ENCODE measurements at regions of chr19 and their contacts with region 1.

Region 1: DNA sequence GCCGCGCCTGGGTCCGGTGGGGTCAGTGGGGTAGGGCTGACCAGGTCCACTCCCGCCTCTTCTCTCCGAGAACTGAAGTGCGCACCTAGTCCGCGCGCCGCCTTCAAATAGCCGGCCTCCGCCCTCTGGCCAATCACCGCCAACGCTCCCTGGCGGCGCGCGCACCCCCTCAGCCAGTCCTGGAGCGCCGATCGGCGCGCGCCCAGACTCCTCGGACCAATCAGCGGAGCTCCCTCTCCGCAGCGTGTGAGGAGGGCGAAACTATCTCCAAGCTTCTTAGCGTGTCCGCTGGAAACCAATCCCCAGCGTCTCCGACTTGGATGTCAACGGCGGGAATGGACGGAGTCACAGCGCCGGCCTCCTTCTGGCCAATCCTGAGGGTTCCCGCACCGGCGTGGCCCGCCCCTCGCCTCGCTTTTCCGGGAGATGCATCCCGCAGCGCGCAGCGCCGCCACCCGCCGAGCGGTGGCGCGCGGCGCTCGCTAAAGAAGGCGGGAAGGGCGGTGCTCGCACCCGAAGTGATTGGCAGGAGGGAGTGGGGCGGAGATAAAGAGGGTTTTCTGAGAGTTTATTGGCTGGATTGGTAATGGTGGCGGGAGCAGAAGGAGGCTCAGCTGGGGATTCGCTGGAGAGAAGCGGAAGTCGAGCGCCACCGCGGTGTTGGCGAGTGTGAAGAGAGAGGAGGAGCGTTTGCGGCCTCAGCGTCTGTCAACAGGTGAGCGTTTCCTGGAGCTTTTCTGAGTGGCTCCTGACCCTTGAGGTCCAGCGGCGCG is at the start of gene ASF1B:
- DNase-seq: peak; percentile 98
- ATAC-seq: peak; percentile 90
- H3K4me3 Mint-ChIP-seq: peak within 1 kb of the TSS; percentile 86
- H3K27ac Mint-ChIP-seq: peak within 1 kb of the TSS; percentile 98
- H3K4me1 Mint-ChIP-seq: peaks cover 19% of the 10 kb centered on the region
- H3K27me3 Mint-ChIP-seq: no peaks in the 10 kb centered on the region; the same call in 1 of the 2 replicates
- CTCF ChIP-seq: no peak; the same call in 1 of the 2 replicates
- total RNA-seq, gene ASF1B: 37.1 to 40.4 TPM (median 38.4 TPM) in 3 replicates

Region 2: DNA sequence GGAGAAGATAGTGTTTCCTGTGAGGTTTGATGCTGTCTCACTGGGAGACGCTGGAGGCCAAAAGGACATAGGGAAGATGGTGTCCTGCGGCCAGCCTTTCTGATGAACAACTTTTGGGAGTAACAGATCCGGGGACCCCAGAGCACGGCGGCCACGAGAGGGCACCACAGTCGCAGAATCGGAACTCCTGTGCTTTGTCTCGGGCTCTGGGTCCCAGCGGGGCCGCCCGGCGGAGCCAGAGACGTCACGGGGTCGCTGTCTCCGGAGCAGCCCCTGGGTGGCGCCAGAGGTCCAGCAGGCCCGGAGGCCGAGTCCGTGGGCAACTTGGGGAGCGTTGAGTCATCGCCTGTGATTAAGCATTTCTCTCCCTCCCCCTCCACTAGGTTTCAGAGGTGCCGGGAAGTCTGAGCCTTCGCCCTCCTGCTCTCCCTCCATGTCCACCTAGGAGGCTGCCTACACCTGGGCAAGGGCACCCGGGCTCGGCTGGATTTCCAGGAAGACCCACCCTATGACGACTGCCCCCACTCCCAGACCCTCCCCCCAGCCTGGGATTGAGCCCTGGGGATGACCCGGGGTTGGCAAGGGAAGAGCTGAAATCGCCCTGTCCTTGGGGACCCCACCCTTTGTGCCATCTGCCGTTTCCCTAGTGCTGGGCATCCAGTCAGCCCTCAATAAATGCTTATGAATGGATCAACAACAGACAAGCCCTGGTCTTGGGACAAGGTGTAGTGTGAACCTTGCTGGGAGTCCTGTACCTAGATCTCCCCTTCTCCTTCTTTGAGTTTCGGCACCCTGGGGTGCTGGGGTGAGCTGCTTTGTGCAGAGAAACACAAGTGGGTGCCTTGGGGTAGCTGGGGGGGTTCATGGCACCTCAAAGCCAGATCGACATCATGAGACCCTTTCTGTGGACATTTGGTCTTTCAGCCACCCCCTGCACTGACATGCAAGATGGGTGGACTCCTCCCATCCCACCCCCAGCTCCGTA is 256.3 kb before region 1 on chr19:
- CTCF ChIA-PET with region 1: interaction called, 10 read pairs
- POLR2A ChIA-PET with region 1: interaction called, 3 read pairs
- DNase-seq: peak; percentile 98
- ATAC-seq: peak; percentile 83
- H3K4me3 Mint-ChIP-seq: peak overlapping the region; percentile 41
- H3K27ac Mint-ChIP-seq: peak overlapping the region; percentile 82
- H3K4me1 Mint-ChIP-seq: peaks cover 26% of the 10 kb centered on the region
- H3K27me3 Mint-ChIP-seq: peaks cover 36% of the 10 kb centered on the region
- CTCF ChIP-seq: peak; percentile 88

Region 3: GRCh38 chr19:14096272-14096992 is 40.3 kb before region 1 on chr19:
- CTCF ChIA-PET with region 1: interaction called, 12 read pairs
- POLR2A ChIA-PET with region 1: interaction called, 3 read pairs
- DNase-seq: no peak
- ATAC-seq: peak; percentile 66
- H3K4me3 Mint-ChIP-seq: no peak overlapping the region
- H3K27ac Mint-ChIP-seq: peak overlapping the region; percentile 9; the same call in 1 of the 2 replicates
- H3K4me1 Mint-ChIP-seq: peaks cover 8% of the 10 kb centered on the region
- H3K27me3 Mint-ChIP-seq: peaks cover 22% of the 10 kb centered on the region
- CTCF ChIP-seq: no peak

Region 4: GRCh38 chr19:14177496-14178074 is 40.9 kb after region 1 on chr19:
- CTCF ChIA-PET with region 1: interaction called, 10 read pairs
- POLR2A ChIA-PET with region 1: no interaction called
- DNase-seq: no peak
- ATAC-seq: no peak
- H3K4me3 Mint-ChIP-seq: no peak overlapping the region
- H3K27ac Mint-ChIP-seq: no peak overlapping the region
- H3K4me1 Mint-ChIP-seq: no peaks in the 10 kb centered on the region
- H3K27me3 Mint-ChIP-seq: no peaks in the 10 kb centered on the region
- CTCF ChIP-seq: no peak

Region 5: GRCh38 chr19:14425696-14426138 is 289.0 kb after region 1 on chr19:
- CTCF ChIA-PET with region 1: interaction called, 11 read pairs
- POLR2A ChIA-PET with region 1: no interaction called
- DNase-seq: no peak
- ATAC-seq: peak; percentile 50
- H3K4me3 Mint-ChIP-seq: no peak overlapping the region
- H3K27ac Mint-ChIP-seq: peak overlapping the region; percentile 7; the same call in 1 of the 2 replicates
- H3K4me1 Mint-ChIP-seq: peaks cover 10% of the 10 kb centered on the region
- H3K27me3 Mint-ChIP-seq: peaks cover 15% of the 10 kb centered on the region
- CTCF ChIP-seq: no peak

Region 6: DNA sequence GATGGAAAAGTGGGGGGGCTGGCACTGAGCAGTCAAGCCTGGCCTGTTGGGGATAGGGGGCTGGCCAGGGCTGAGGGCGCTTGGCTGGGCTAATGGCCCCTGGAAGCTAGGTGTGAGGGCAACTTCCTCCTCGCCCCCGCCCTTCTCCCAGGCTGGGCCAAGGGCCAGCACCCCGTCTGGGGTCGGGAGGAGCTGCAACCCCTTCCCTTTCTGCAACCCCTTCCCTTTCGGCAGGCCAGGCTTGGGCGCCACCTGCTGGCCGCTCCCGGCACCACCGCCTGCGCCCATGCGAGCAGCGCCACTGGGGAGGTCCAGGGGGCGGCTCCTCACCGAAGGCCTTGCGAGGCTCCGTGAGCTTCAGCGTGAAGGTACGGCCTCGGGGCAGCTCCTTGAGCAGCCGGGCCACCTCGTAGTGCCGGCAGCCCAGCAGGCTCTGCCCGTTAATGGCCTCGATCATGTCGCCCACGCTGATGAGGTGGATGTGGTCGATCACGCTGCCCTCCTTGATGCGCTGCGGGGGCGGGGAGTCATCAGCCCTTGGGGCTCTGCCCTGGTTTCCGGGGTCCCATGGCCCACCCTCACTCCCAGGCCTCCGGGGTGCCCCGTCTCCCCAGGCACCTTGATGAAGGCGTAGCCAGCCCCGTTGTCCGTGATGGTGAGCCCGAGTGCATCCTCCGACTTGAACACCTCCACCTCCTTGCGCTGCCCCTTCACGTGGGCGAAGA is 343.4 kb after region 1 on chr19:
- CTCF ChIA-PET with region 1: interaction called, 14 read pairs
- POLR2A ChIA-PET with region 1: no interaction called
- DNase-seq: peak; percentile 94
- ATAC-seq: peak; percentile 85
- H3K4me3 Mint-ChIP-seq: no peak overlapping the region
- H3K27ac Mint-ChIP-seq: no peak overlapping the region
- H3K4me1 Mint-ChIP-seq: peaks cover 11% of the 10 kb centered on the region
- H3K27me3 Mint-ChIP-seq: no peaks in the 10 kb centered on the region
- CTCF ChIP-seq: peak; percentile 98